Heart left ventricle (tissue), 16 donors: ENCODE measurements at regions of chr20 and their contacts with region 1.

Region 1: DNA sequence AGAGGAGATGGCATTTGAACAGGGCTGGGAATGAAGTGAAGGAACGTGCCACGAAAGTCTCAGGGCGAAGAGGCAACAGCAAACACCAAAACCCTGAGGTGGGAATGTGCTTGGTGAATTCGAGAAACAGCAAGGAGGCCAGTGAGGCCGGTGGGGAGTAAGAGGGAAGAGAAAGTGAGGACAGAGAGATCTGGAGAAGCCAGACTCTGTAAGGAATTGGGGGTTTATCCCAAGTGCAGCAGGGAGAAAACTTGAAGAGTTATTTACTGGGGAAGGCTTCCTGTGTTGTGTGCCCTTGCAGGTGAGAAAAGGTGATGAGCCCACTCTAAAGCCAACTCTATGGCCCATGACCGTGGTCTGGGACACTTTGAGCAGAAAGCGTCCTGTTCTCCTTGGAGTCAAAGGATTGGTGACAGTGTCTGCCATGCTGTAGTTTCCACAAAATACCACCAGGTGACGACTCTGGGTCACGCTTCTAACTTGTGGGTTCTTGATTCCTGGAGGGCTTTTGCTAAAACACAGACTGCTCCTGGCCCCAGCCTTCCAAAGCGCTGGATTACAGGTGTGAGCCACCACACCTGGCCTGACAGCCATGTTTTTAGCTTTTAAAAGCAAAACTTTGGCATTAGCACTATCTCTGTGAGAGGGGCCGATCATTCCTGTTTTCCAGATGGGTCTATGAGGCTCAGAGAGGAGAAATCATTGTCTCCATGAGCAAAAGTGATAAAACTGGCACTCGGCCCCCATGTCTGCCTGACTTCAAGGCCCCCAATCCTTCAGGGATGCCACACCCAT is 18.0 kb upstream of the CSNK2A1 start:
- DNase-seq: peak in 4 of 5 donors; percentile 66 to 76 (median 71)
- ATAC-seq: peak; percentile 70 to 90 (median 80)
- H3K4me3 ChIP-seq: no peak overlapping the region
- H3K27ac ChIP-seq: no peak overlapping the region
- H3K4me1 ChIP-seq: peaks cover 0 to 20% (median 1%) of the 10 kb centered on the region in 12 donors
- H3K27me3 ChIP-seq: no peaks in the 10 kb centered on the region
- CTCF ChIP-seq: peak; percentile 91 to 100 (median 99)
- POLR2A ChIP-seq: no peak

Region 2: DNA sequence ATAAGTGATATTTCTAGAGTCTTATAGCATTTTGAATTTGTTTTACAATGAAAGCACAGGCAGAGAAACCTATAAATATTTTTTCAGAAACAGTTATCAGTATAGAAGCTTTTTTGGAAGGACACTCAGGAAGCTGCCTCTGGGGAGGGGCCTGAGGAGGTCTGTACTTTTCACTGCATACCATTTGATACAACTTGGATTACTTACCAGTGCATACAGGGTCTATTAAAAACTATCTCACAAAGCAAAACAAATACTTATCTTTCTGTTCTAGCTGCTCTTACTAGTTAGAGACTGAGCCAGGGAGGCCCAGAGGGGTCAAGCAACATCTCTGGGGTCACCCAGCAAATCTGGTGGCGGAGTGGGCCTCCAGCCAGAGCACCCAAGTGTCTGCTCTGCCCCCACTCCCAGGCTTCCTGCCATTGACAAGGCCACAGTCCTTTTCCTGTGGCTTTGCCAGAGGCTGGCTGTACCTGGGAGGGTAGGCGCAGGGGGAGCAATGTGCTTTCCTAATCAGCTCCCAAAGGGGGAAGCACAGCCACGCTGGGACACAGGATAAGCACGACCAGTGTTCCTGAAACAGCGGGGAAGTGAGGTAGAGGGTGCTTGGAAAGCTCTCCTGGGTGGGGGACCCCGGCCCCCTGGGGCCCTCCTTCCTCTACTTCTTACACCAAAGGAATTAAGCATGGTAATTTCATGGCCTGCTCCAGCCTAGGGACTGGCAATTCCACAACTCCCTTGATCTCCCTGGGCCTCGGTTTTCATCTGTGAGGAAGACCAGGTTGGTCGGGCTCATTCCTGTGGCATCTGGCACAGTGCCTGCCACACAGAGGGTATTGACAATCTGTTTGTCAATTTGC is 40.7 kb after region 1 on chr20:
- intact Hi-C with region 1: loop called in 2 of 10 experiments (anchors 2 to 5 kb)
- DNase-seq: peak; percentile 82 to 89 (median 84)
- ATAC-seq: peak; percentile 73 to 87 (median 81)
- H3K4me3 ChIP-seq: no peak overlapping the region
- H3K27ac ChIP-seq: peak overlapping the region; percentile 75 to 93 (median 84)
- H3K4me1 ChIP-seq: peaks cover 9 to 81% (median 58%) of the 10 kb centered on the region in 12 donors
- H3K27me3 ChIP-seq: no peaks in the 10 kb centered on the region
- CTCF ChIP-seq: peak in 2 of 12 donors; percentile 6 to 22
- POLR2A ChIP-seq: peak in 1 of 2 donors; percentile 16

Region 3: GRCh38 chr20:645318-646106 is 83.9 kb after region 1 on chr20:
- intact Hi-C with region 1: loop called (anchors 1 to 2 kb)
- DNase-seq: peak; percentile 68 to 89 (median 74)
- ATAC-seq: peak; percentile 63 to 85 (median 77)
- H3K4me3 ChIP-seq: no peak overlapping the region
- H3K27ac ChIP-seq: peak overlapping the region in 9 of 12 donors; percentile 15 to 65 (median 52)
- H3K4me1 ChIP-seq: peaks cover 0 to 40% (median 18%) of the 10 kb centered on the region in 12 donors
- H3K27me3 ChIP-seq: peaks cover 0 to 4% (median 0%) of the 10 kb centered on the region in 9 donors
- CTCF ChIP-seq: peak; percentile 93 to 98 (median 96)
- POLR2A ChIP-seq: no peak

Region 4: GRCh38 chr20:709423-709822 is 147.8 kb after region 1 on chr20:
- intact Hi-C with region 1: no loop called
- DNase-seq: peak in 4 of 5 donors; percentile 38 to 76 (median 68)
- ATAC-seq: peak in 3 of 4 donors; percentile 57 to 70 (median 65)
- H3K4me3 ChIP-seq: peak overlapping the region in 9 of 12 donors; percentile 13 to 52 (median 39)
- H3K27ac ChIP-seq: no peak overlapping the region
- H3K4me1 ChIP-seq: peaks cover 0 to 11% (median 0%) of the 10 kb centered on the region in 12 donors
- H3K27me3 ChIP-seq: peaks cover 0 to 39% (median 6%) of the 10 kb centered on the region in 9 donors
- CTCF ChIP-seq: no peak
- POLR2A ChIP-seq: no peak

Region 5: GRCh38 chr20:728248-728944 is 166.8 kb after region 1 on chr20:
- intact Hi-C with region 1: loop called in 6 of 10 experiments (anchors 1 to 5 kb)
- DNase-seq: peak in 4 of 5 donors; percentile 33 to 73 (median 61)
- ATAC-seq: peak; percentile 69 to 89 (median 82)
- H3K4me3 ChIP-seq: peak overlapping the region; percentile 20 to 70 (median 61)
- H3K27ac ChIP-seq: peak overlapping the region in 1 of 12 donors; percentile 52
- H3K4me1 ChIP-seq: peaks cover 0 to 13% (median 3%) of the 10 kb centered on the region in 12 donors
- H3K27me3 ChIP-seq: peaks cover 0 to 52% (median 9%) of the 10 kb centered on the region in 9 donors
- CTCF ChIP-seq: peak; percentile 50 to 75 (median 65)
- POLR2A ChIP-seq: no peak

Region 6: GRCh38 chr20:739736-740135 is 178.1 kb after region 1 on chr20:
- intact Hi-C with region 1: loop called in 6 of 10 experiments (anchors 1 to 5 kb)
- DNase-seq: no peak
- ATAC-seq: no peak
- H3K4me3 ChIP-seq: no peak overlapping the region
- H3K27ac ChIP-seq: no peak overlapping the region
- H3K4me1 ChIP-seq: peaks cover 0 to 3% (median 0%) of the 10 kb centered on the region in 12 donors
- H3K27me3 ChIP-seq: peaks cover 0 to 3% (median 0%) of the 10 kb centered on the region in 9 donors
- CTCF ChIP-seq: no peak
- POLR2A ChIP-seq: no peak